ENCODE measurements at regions of chr1 and their contacts with region 1.

Region 1: GRCh38 chr1:179809506-179810366 is 66.6 kb downstream of the FAM163A start:
- DNase-seq: peak; percentile 78
- ATAC-seq: peak; percentile 72
- H3K4me3 ChIP-seq: no peak overlapping the region
- H3K27ac ChIP-seq: no peak overlapping the region
- H3K4me1 ChIP-seq: peaks cover 9% of the 10 kb centered on the region
- H3K27me3 ChIP-seq: peaks cover 43% of the 10 kb centered on the region
- CTCF ChIP-seq: peak; percentile 87
- POLR2A ChIP-seq: no peak
- RAD21 ChIP-seq: peak; percentile 64

Region 2: DNA sequence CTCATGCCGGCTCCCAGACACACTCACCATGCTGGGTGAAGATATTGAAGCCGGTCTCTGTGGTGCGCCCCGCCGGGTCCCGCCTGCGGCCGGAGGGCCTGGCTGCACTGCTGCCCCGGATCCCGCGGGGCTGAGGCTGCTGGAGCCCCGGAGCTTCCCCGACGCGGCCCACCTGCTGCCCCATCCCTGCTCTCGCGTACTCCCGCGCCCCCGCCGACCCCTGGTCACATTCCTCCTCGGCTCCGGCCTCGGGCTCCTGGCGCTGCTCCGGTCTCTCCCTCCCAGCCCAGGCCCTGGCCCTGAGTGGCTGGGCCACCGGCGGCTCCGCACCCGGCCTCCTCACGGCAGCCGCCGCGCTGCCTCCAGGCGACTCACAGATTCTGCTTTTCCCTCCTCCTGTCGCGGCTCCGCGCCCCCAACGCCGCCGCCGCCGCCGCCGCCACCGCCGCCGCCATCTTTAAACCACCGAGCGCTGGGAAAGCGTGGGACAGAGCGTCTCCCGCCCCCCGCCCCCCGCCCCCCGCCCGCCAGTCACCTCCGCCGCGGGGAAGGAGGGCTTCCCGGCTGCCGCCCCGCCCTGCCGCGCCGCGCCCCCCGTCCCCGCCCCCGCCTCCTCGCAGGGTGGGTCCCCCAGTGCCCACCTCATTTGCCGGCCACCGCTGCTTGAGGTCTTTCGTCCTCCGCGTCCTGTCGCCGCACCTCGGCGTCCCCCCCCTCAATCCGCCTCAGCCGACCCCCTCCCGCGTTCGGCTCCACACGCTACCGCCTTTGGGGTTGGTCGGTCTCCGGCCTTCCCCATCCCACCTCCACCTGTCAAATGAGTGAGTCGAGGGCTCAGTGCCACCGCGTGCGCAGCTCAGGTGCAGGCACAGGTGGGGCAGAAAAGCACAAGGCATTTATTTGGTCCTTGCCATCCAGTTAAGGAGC is 580.3 kb before region 1 on chr1 and contains the start of gene ABL2:
- CTCF ChIA-PET with region 1: no interaction called
- POLR2A ChIA-PET with region 1: no interaction called
- dilution Hi-C with region 1: no loop called
- in situ Hi-C with region 1: loop called (anchors 25 kb)
- intact Hi-C with region 1: no loop called
- DNase-seq: no peak
- ATAC-seq: peak; percentile 74
- H3K4me3 ChIP-seq: peak within 1 kb of the TSS; percentile 99
- H3K27ac ChIP-seq: peak within 1 kb of the TSS; percentile 93
- H3K4me1 ChIP-seq: peaks cover 4% of the 10 kb centered on the region; the same call in 1 of the 2 replicates
- H3K27me3 ChIP-seq: no peaks in the 10 kb centered on the region
- CTCF ChIP-seq: no peak
- POLR2A ChIP-seq: no peak
- RAD21 ChIP-seq: no peak
- total RNA-seq, gene ABL2: 88.3 and 110 TPM in 2 replicates

Region 3: DNA sequence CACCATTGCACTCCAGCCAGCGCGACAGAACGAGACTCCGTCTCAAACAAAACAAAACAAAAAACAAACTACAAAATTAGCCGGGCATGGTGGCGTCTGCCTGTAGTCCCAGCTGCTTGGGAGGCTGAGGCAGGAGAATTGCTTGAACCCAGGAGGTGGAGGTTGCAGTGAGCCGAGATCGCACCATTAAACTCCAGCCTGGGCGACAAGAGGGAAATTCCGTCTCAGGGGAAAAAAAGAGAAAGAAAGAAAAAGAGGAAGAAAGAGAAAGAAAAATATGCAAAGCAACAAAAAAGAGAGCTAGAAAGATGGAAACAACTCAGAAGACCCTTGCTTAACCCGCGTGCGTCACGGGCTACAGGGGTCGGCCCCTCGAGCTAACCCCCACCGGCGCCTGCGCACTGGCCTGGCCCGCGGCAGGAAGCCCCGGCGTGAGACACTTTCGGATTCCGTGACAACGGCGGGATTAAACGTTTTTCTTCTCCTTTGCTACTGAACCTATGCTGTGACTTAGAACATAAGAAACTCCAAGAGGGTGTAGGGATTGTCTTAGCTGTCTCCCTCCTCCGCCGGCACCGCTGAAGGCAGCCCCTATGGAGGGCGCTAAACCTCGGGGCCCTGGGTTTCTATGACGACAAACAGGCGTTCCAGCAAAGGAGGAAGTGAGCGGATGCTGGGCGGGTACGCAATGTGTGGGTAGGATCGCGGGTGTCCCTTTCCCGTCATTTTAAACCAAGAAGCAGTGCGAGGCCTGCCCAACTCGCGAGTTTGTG is 444.2 kb before region 1 on chr1 and contains the start of gene AXDND1:
- CTCF ChIA-PET with region 1: no interaction called
- POLR2A ChIA-PET with region 1: no interaction called
- dilution Hi-C with region 1: no loop called
- in situ Hi-C with region 1: no loop called
- intact Hi-C with region 1: loop called (anchors 5 kb)
- DNase-seq: peak; percentile 80
- ATAC-seq: peak; percentile 95
- H3K4me3 ChIP-seq: peak within 1 kb of the TSS; percentile 58
- H3K27ac ChIP-seq: peak within 1 kb of the TSS; percentile 91
- H3K4me1 ChIP-seq: peaks cover 3% of the 10 kb centered on the region; the same call in 1 of the 2 replicates
- H3K27me3 ChIP-seq: no peaks in the 10 kb centered on the region
- CTCF ChIP-seq: peak; percentile 28
- POLR2A ChIP-seq: no peak; the same call in 1 of the 2 replicates
- RAD21 ChIP-seq: no peak
- total RNA-seq, gene AXDND1: under 0.01 TPM in 1 of 2 replicates, not detected in the other

Region 4: DNA sequence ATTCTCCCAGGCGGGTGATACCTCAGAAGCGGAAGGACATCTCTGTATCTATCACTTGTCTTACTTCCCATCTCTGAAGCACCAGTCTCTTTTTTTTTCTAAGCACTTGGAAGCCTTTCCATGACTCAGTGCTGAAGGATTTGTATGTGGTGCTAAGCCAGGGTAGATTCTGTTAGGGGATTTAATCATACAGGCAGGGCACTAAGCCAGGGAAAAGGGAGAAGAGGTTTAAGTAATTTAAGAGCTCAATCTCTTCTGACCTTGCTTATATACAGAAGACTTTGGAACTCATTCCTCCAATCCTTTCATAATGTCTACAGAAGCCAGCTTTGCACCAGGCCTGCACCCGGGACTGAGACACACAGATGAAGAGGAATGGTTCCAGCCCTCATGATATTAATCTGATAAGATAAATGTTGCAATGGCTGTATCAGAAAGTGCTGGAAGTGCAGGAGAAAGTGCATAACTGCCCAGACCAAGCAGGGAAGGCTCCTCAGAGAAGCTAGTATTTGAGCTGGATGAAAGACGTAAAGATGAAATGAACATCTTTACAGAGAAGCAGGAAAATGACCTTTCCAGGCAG is 55.6 kb before region 1 on chr1:
- CTCF ChIA-PET with region 1: interaction called, 5 read pairs
- POLR2A ChIA-PET with region 1: no interaction called
- dilution Hi-C with region 1: no loop called
- in situ Hi-C with region 1: no loop called
- intact Hi-C with region 1: loop called (anchors 5 kb)
- DNase-seq: peak; percentile 87
- ATAC-seq: peak; percentile 89
- H3K4me3 ChIP-seq: no peak overlapping the region
- H3K27ac ChIP-seq: no peak overlapping the region
- H3K4me1 ChIP-seq: peaks cover 7% of the 10 kb centered on the region
- H3K27me3 ChIP-seq: peaks cover 18% of the 10 kb centered on the region
- CTCF ChIP-seq: no peak
- POLR2A ChIP-seq: no peak
- RAD21 ChIP-seq: no peak

Region 5: GRCh38 chr1:179828554-179829110 is 18.9 kb after region 1 on chr1:
- CTCF ChIA-PET with region 1: interaction called, 10 read pairs
- POLR2A ChIA-PET with region 1: interaction called, 3 read pairs
- dilution Hi-C with region 1: no loop called
- in situ Hi-C with region 1: no loop called
- intact Hi-C with region 1: no loop called
- DNase-seq: no peak
- ATAC-seq: no peak
- H3K4me3 ChIP-seq: no peak overlapping the region
- H3K27ac ChIP-seq: no peak overlapping the region
- H3K4me1 ChIP-seq: peaks cover 3% of the 10 kb centered on the region; the same call in 1 of the 2 replicates
- H3K27me3 ChIP-seq: peaks cover 18% of the 10 kb centered on the region
- CTCF ChIP-seq: no peak
- POLR2A ChIP-seq: no peak
- RAD21 ChIP-seq: no peak

Measured in IMR-90 (cell line).